Sigmoid colon (tissue), 7 donors: ENCODE measurements at regions of chr4 and their contacts with region 1.

Region 1: DNA sequence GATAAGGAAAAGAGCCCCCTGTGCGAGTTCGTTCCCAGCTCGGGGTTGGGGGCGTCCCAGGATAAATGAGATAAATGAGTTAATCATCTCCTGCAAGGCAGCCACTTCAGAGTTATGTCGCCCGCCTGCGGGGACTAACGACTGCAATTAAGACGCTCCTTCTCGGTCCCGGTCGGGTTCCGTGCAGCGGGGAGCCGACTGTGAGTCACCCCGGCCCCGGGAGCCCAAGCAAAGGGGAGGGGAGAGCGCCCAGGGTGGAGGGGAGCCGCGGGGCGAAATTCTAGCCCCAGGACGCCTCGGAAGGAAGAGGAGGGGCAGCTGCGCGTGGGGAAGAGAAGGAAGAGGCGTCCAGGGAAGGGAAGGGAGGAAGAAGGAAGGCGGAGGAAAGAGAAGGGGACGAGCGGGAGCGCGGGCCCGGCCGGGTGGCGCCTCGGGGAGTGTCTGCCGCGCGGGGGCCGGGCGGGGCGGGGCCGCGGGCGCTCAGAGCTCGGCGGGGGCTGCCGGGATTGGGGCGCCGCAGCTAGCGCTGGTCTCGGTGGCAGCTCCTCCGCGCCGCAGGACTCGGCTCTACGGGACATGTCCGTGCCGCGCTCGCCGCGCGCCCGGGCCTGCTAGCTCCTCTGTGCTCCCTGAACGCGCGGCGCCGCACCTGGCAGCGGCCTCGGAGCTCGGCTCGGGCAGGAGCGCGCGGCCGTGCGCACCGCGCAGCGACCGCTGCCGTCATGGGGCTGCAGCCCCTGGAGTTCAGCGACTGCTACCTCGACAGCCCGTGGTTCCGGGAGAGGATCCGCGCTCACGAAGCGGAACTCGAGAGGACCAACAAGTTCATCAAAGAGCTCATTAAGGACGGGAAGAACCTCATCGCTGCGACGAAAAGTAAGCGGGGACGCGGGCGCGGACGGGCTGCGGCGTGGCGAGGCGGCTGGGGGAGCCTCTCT is at the start of gene ARHGAP10:
- DNase-seq: peak; percentile 92
- H3K4me3 ChIP-seq: peak within 1 kb of the TSS; percentile 58 to 82 (median 80)
- H3K27ac ChIP-seq: peak within 1 kb of the TSS; percentile 87 to 97 (median 95)
- H3K4me1 ChIP-seq: peaks cover 0 to 44% (median 29%) of the 10 kb centered on the region in 4 donors
- H3K27me3 ChIP-seq: no peaks in the 10 kb centered on the region
- CTCF ChIP-seq: no peak
- EP300 ChIP-seq: no peak
- POLR2A ChIP-seq: no peak
- total RNA-seq, gene ARHGAP10: 123 to 158 (median 139) TPM

Region 2: DNA sequence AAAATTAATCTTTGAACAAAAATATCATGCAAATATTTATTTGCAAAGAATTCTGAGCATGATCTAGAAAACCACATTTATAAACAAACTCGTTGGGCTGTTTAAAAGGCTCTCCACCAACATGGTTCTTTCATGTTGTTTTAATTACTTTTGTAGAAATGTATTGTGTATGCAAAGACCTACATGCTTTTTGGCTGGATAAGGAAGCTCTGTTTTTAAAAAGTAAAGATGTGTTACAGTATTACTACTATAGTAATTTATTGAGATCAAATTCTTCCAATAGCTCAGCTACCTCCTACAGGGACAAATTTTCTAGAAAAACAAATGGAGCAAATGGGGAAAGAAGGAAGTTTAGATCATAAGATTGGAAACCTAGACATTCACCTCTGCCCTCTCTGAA is 608.7 kb before region 1 on chr4:
- intact Hi-C with region 1: no loop called
- DNase-seq: no peak
- H3K4me3 ChIP-seq: no peak overlapping the region
- H3K27ac ChIP-seq: no peak overlapping the region
- H3K4me1 ChIP-seq: peaks cover 0 to 15% (median 9%) of the 10 kb centered on the region in 4 donors
- H3K27me3 ChIP-seq: no peaks in the 10 kb centered on the region
- CTCF ChIP-seq: no peak
- EP300 ChIP-seq: no peak
- POLR2A ChIP-seq: no peak

Region 3: GRCh38 chr4:147530723-147531122 is 201.1 kb before region 1 on chr4:
- intact Hi-C with region 1: no loop called
- DNase-seq: no peak
- H3K4me3 ChIP-seq: no peak overlapping the region
- H3K27ac ChIP-seq: no peak overlapping the region
- H3K4me1 ChIP-seq: peaks cover 0 to 10% (median 8%) of the 10 kb centered on the region in 4 donors
- H3K27me3 ChIP-seq: no peaks in the 10 kb centered on the region
- CTCF ChIP-seq: no peak
- EP300 ChIP-seq: no peak
- POLR2A ChIP-seq: no peak

Region 4: DNA sequence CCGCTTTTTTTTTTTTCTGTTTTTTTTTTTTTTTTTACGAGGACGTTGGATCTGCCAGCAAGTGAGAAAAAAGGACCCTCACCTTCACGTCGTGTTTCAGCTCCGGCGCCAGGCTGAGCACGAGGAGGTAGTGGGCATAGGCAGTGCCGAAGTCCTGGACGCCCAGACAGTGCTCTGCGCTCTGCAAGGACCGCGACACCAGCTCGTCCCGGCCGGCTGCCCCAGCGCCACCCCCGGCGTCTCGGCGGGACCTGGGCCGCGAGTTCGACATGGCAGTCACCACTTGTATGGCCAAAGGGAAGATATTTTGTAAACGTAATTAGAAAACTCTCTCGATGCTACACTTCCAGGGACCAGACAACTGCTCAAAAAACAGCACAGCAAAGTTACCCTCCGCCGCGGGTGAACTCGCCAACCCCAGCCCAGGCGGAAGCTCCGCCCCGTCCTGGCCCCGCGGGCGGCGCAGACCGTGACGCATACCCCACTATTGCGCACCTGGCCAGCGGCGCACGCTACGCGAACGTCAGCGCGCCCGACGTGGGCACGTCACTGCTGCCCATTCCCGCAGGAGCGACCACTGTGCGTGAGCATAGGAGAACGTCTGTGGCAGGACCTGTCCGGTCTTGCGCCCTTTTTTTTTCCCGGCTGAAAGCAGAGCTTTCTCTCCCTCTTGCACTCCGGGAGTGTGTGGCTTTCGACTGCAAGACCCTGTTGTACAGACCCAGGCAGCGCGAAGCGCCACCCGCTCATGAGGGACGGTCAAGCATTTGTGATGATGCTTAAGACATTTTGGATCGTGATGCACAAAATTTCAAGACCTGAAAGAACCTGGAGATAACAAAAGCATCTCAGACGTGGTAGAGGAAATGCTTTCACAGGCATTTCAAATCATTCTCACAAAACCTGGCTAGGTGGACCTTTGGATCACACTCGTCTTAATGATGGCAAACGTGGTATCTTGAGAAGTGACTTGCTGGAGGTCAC is 47.8 kb before region 1 on chr4 and contains the start of gene PRMT9:
- intact Hi-C with region 1: loop called (anchors 2 kb)
- DNase-seq: peak; percentile 96
- H3K4me3 ChIP-seq: peak within 1 kb of the TSS; percentile 65 to 90 (median 80)
- H3K27ac ChIP-seq: peak within 1 kb of the TSS; percentile 84 to 95 (median 92)
- H3K4me1 ChIP-seq: peaks cover 0 to 22% (median 16%) of the 10 kb centered on the region in 4 donors
- H3K27me3 ChIP-seq: no peaks in the 10 kb centered on the region
- CTCF ChIP-seq: no peak
- EP300 ChIP-seq: peak in 3 of 4 donors; percentile 94 to 95 (median 94)
- POLR2A ChIP-seq: peak; percentile 87 to 90
- total RNA-seq, gene PRMT9: 7.1 to 10.7 (median 10.0) TPM

Region 5: DNA sequence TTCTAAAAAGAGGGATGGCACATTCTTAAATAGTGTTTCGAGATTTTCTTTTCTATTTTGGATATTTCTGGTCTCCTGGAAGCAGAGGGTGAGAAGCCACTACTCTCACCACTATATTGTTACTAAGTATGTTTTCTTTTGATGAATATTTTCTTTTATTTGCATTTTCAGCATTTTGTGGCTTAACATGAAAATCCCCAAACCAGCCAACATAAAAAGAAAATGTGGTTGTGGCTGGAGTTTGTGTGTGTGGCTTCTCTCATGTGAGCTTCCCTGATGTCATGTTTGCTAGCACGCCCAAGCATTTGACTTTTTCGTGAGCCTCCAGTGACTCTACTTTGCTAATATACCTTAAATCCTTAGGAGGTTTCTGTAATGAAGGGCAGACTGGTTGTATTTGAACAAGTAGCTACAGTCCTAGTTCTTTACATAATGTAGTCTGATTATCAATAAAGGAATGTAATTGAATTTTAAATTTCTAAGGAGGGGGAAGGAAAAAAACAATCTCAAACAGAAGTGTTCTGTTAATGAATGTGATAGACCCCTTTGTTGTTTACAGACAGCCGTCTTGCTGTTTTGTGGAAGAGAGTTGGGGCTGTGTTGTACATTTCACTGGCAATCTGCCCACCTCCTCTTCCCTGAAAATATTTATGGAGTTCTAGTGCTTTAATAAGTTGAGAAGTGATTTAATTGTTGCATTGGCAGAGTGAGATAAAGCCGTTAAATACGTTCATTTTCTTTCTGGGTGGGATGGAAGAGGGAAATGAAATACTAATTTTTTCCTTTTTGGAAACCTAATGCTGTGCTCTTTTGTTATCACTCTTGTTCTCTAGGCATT is 114.7 kb after region 1 on chr4:
- intact Hi-C with region 1: loop called (anchors 5 kb)
- DNase-seq: no peak
- H3K4me3 ChIP-seq: no peak overlapping the region
- H3K27ac ChIP-seq: peak overlapping the region; percentile 60 to 72 (median 68)
- H3K4me1 ChIP-seq: peaks cover 0 to 74% (median 72%) of the 10 kb centered on the region in 4 donors
- H3K27me3 ChIP-seq: no peaks in the 10 kb centered on the region
- CTCF ChIP-seq: no peak
- EP300 ChIP-seq: no peak
- POLR2A ChIP-seq: no peak